Naive thymus-derived CD4-positive, alpha-beta T cell (primary cell): ENCODE measurements at regions of chr2 and their contacts with region 1.

Region 1: GRCh38 chr2:221517696-221518151 is 54.4 kb downstream of the EPHA4 start:
- DNase-seq: peak; percentile 25 to 86 (median 74)
- ATAC-seq: peak; percentile 79
- H3K4me3 ChIP-seq: peak overlapping the region; percentile 43
- H3K4me3 Mint-ChIP-seq: no peak overlapping the region
- H3K27ac ChIP-seq: peak overlapping the region; percentile 66
- H3K27ac Mint-ChIP-seq: no peak overlapping the region
- H3K4me1 ChIP-seq: peaks cover 46 to 53% of the 10 kb centered on the region in 2 donors
- H3K4me1 Mint-ChIP-seq: peaks cover 0 to 31% (median 10%) of the 10 kb centered on the region in 7 donors
- H3K27me3 ChIP-seq: no peaks in the 10 kb centered on the region
- H3K27me3 Mint-ChIP-seq: peaks cover 0 to 6% (median 0%) of the 10 kb centered on the region in 5 donors

Region 2: GRCh38 chr2:220687231-220687843 is 830.4 kb before region 1 on chr2:
- CTCF ChIA-PET with region 1: no interaction called
- POLR2A ChIA-PET with region 1: no interaction called
- intact Hi-C with region 1: loop called in 1 of 2 experiments (anchors 2 kb)
- DNase-seq: peak; percentile 13 to 61 (median 50)
- ATAC-seq: peak; percentile 89
- H3K4me3 ChIP-seq: no peak overlapping the region
- H3K4me3 Mint-ChIP-seq: no peak overlapping the region
- H3K27ac ChIP-seq: no peak overlapping the region
- H3K27ac Mint-ChIP-seq: no peak overlapping the region
- H3K4me1 ChIP-seq: no peaks in the 10 kb centered on the region
- H3K4me1 Mint-ChIP-seq: no peaks in the 10 kb centered on the region
- H3K27me3 ChIP-seq: no peaks in the 10 kb centered on the region
- H3K27me3 Mint-ChIP-seq: peaks cover 2 to 35% (median 18%) of the 10 kb centered on the region in 5 donors

Region 3: GRCh38 chr2:221429741-221430491 is 87.8 kb before region 1 on chr2:
- CTCF ChIA-PET with region 1: no interaction called
- POLR2A ChIA-PET with region 1: no interaction called
- intact Hi-C with region 1: loop called in 1 of 2 experiments (anchors 10 kb)
- DNase-seq: no peak
- ATAC-seq: no peak
- H3K4me3 ChIP-seq: no peak overlapping the region
- H3K4me3 Mint-ChIP-seq: no peak overlapping the region
- H3K27ac ChIP-seq: no peak overlapping the region
- H3K27ac Mint-ChIP-seq: no peak overlapping the region
- H3K4me1 ChIP-seq: no peaks in the 10 kb centered on the region
- H3K4me1 Mint-ChIP-seq: no peaks in the 10 kb centered on the region
- H3K27me3 ChIP-seq: no peaks in the 10 kb centered on the region
- H3K27me3 Mint-ChIP-seq: no peaks in the 10 kb centered on the region

Region 4: GRCh38 chr2:221502270-221503010 is 15.3 kb before region 1 on chr2:
- CTCF ChIA-PET with region 1: interaction called, 3 read pairs
- POLR2A ChIA-PET with region 1: interaction called, 5 read pairs
- intact Hi-C with region 1: loop called (anchors 1 to 2 kb)
- DNase-seq: no peak
- ATAC-seq: peak; percentile 18
- H3K4me3 ChIP-seq: no peak overlapping the region
- H3K4me3 Mint-ChIP-seq: no peak overlapping the region
- H3K27ac ChIP-seq: no peak overlapping the region
- H3K27ac Mint-ChIP-seq: peak overlapping the region in 2 of 9 donors; percentile 19 to 22
- H3K4me1 ChIP-seq: no peaks in the 10 kb centered on the region
- H3K4me1 Mint-ChIP-seq: peaks cover 0 to 22% (median 15%) of the 10 kb centered on the region in 7 donors
- H3K27me3 ChIP-seq: no peaks in the 10 kb centered on the region
- H3K27me3 Mint-ChIP-seq: peaks cover 0 to 5% (median 0%) of the 10 kb centered on the region in 5 donors

Region 5: GRCh38 chr2:221535824-221536223 is 18.1 kb after region 1 on chr2:
- CTCF ChIA-PET with region 1: no interaction called
- POLR2A ChIA-PET with region 1: interaction called, 47 read pairs
- intact Hi-C with region 1: loop called in 1 of 2 experiments (anchors 2 kb)
- DNase-seq: no peak
- ATAC-seq: no peak
- H3K4me3 ChIP-seq: no peak overlapping the region
- H3K4me3 Mint-ChIP-seq: no peak overlapping the region
- H3K27ac ChIP-seq: no peak overlapping the region
- H3K27ac Mint-ChIP-seq: no peak overlapping the region
- H3K4me1 ChIP-seq: peaks cover 0 to 2% of the 10 kb centered on the region in 2 donors
- H3K4me1 Mint-ChIP-seq: peaks cover 5 to 23% (median 10%) of the 10 kb centered on the region in 7 donors
- H3K27me3 ChIP-seq: no peaks in the 10 kb centered on the region
- H3K27me3 Mint-ChIP-seq: peaks cover 0 to 36% (median 0%) of the 10 kb centered on the region in 5 donors

Region 6: DNA sequence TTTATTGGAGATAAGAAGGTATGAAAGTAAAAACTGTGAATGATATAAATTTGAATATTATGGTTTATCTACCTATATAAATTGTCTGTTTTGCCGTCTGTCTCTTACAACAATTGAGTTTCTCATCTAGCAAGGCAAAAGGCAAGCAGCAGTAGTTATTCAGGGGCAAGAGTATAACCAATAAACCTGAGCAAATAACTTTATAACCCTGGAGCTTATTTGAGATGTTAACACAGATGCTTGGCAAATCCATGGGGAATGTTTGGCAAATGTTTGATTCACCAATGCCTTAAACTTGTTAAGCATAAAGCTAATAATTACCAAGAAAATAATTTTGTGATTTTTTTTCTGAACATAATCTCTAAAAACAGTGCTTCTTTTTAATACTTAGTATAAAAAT is 64.3 kb after region 1 on chr2:
- CTCF ChIA-PET with region 1: no interaction called
- POLR2A ChIA-PET with region 1: no interaction called
- intact Hi-C with region 1: no loop called
- DNase-seq: no peak
- ATAC-seq: no peak
- H3K4me3 ChIP-seq: no peak overlapping the region
- H3K4me3 Mint-ChIP-seq: no peak overlapping the region
- H3K27ac ChIP-seq: no peak overlapping the region
- H3K27ac Mint-ChIP-seq: no peak overlapping the region
- H3K4me1 ChIP-seq: no peaks in the 10 kb centered on the region
- H3K4me1 Mint-ChIP-seq: no peaks in the 10 kb centered on the region
- H3K27me3 ChIP-seq: peaks cover 0 to 2% of the 10 kb centered on the region in 2 donors
- H3K27me3 Mint-ChIP-seq: peaks cover 39 to 64% (median 52%) of the 10 kb centered on the region in 5 donors

Region 7: DNA sequence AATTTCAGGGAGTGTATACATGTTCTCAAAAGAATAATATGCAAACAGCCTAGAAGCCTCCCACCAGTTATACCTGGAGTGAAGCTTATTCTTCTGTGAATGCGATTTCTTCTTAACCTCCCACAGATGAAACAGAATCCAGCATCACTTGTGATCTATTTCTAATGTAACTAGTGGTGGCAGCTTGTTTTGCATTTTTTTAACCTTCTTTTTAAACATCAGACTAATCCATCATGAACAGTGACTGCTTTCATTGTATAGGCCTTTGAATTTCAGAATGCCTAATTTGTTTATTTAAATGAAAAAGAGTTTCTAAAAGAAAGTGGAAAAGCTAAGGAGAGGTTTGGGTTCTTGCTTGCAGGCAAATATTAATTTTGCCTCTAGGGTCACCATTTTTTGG is 140.1 kb after region 1 on chr2:
- CTCF ChIA-PET with region 1: no interaction called
- POLR2A ChIA-PET with region 1: no interaction called
- intact Hi-C with region 1: no loop called
- DNase-seq: no peak
- ATAC-seq: no peak
- H3K4me3 ChIP-seq: no peak overlapping the region
- H3K4me3 Mint-ChIP-seq: no peak overlapping the region
- H3K27ac ChIP-seq: no peak overlapping the region
- H3K27ac Mint-ChIP-seq: no peak overlapping the region
- H3K4me1 ChIP-seq: no peaks in the 10 kb centered on the region
- H3K4me1 Mint-ChIP-seq: no peaks in the 10 kb centered on the region
- H3K27me3 ChIP-seq: no peaks in the 10 kb centered on the region
- H3K27me3 Mint-ChIP-seq: peaks cover 0 to 13% (median 7%) of the 10 kb centered on the region in 5 donors

Region 8: DNA sequence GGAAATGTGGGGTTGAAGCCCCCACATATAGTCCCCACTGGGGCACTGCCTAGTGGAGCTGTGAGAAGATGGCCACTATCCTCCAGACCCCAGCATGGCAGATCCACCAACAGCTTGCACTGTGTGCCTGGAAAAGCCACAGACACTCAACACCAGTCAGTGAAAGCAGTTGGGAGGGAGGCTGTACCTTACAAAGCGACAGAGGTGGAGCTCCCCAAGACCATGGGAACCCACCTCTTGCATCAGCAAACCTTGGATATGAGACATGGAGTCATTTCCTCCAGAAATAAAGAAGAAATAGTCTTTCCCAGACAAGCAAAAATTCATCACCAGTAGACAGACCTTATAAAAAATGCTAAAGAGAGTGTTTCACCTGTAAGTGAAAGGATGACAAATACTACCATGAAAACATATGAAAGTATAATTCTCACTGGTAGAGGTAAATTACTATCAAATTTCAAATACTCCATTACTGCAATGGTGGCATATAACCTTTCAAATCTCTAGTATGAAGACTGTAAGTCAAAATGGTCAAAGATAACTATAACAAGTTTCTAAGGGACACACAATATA is 207.0 kb after region 1 on chr2:
- CTCF ChIA-PET with region 1: no interaction called
- POLR2A ChIA-PET with region 1: no interaction called
- intact Hi-C with region 1: loop called in 1 of 2 experiments (anchors 5 kb)
- DNase-seq: no peak
- ATAC-seq: no peak
- H3K4me3 ChIP-seq: no peak overlapping the region
- H3K4me3 Mint-ChIP-seq: peak overlapping the region in 2 of 10 donors; percentile 3 to 72
- H3K27ac ChIP-seq: no peak overlapping the region
- H3K27ac Mint-ChIP-seq: peak overlapping the region in 3 of 9 donors; percentile 10 to 95 (median 42)
- H3K4me1 ChIP-seq: no peaks in the 10 kb centered on the region
- H3K4me1 Mint-ChIP-seq: no peaks in the 10 kb centered on the region
- H3K27me3 ChIP-seq: no peaks in the 10 kb centered on the region
- H3K27me3 Mint-ChIP-seq: peaks cover 0 to 6% (median 0%) of the 10 kb centered on the region in 5 donors